ENCODE measurements at regions of chr13 and their contacts with region 1.

Region 1: GRCh38 chr13:51286135-51287002 is 53.1 kb upstream of the SERPINE3 start:
- DNase-seq: peak; percentile 83 to 91
- H3K4me3 ChIP-seq: no peak overlapping the region
- H3K27ac ChIP-seq: no peak overlapping the region
- H3K4me1 ChIP-seq: peaks cover 0 to 17% (median 10%) of the 10 kb centered on the region in 4 donors
- H3K27me3 ChIP-seq: no peaks in the 10 kb centered on the region
- CTCF ChIP-seq: peak in 6 of 7 experiments; percentile 4 to 87 (median 80)
- EP300 ChIP-seq: no peak
- POLR2A ChIP-seq: no peak

Region 2: DNA sequence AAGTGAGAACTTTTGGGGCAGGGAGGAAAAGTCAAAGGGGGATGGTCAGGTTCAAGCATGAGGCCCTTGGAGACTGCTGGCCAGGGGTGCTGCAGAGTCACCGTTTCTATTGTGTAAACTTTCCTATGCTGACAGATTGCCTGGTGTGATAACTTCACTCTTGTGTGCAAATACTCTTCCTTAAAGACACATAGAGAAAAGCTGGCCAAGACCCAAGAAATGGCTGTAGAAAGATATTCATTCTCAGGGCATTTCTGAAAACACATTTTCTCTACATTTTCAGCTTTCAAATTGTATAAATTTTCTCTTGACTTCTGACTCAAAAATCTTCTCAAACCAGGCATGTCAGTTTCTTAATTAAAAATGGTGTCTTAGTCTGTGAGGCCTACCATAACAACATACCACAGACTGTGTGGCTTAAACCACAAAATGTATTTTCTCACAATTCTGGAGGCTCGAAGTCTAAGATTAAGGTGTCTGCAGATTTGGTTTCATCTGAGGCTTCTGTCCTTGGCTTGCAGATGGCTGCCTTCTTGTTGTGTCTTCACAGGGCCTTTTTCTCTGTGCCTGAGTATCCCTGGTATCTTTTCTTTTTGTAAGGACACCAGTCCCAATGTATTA is 966.6 kb before region 1 on chr13:
- intact Hi-C with region 1: no loop called
- DNase-seq: peak in 1 of 2 donors; percentile 23
- H3K4me3 ChIP-seq: no peak overlapping the region
- H3K27ac ChIP-seq: no peak overlapping the region
- H3K4me1 ChIP-seq: peaks cover 0 to 17% (median 7%) of the 10 kb centered on the region in 4 donors
- H3K27me3 ChIP-seq: no peaks in the 10 kb centered on the region
- CTCF ChIP-seq: no peak
- EP300 ChIP-seq: no peak
- POLR2A ChIP-seq: no peak

Region 3: GRCh38 chr13:51154029-51154555 is 132.3 kb before region 1 on chr13:
- intact Hi-C with region 1: loop called (anchors 10 kb)
- DNase-seq: no peak
- H3K4me3 ChIP-seq: no peak overlapping the region
- H3K27ac ChIP-seq: no peak overlapping the region
- H3K4me1 ChIP-seq: no peaks in the 10 kb centered on the region
- H3K27me3 ChIP-seq: no peaks in the 10 kb centered on the region
- CTCF ChIP-seq: no peak
- EP300 ChIP-seq: no peak
- POLR2A ChIP-seq: no peak

Region 4: GRCh38 chr13:51181786-51182383 is 104.5 kb before region 1 on chr13:
- intact Hi-C with region 1: no loop called
- DNase-seq: no peak
- H3K4me3 ChIP-seq: no peak overlapping the region
- H3K27ac ChIP-seq: no peak overlapping the region
- H3K4me1 ChIP-seq: no peaks in the 10 kb centered on the region
- H3K27me3 ChIP-seq: peaks cover 0 to 10% (median 0%) of the 10 kb centered on the region in 3 donors
- CTCF ChIP-seq: no peak
- EP300 ChIP-seq: no peak
- POLR2A ChIP-seq: no peak

Region 5: DNA sequence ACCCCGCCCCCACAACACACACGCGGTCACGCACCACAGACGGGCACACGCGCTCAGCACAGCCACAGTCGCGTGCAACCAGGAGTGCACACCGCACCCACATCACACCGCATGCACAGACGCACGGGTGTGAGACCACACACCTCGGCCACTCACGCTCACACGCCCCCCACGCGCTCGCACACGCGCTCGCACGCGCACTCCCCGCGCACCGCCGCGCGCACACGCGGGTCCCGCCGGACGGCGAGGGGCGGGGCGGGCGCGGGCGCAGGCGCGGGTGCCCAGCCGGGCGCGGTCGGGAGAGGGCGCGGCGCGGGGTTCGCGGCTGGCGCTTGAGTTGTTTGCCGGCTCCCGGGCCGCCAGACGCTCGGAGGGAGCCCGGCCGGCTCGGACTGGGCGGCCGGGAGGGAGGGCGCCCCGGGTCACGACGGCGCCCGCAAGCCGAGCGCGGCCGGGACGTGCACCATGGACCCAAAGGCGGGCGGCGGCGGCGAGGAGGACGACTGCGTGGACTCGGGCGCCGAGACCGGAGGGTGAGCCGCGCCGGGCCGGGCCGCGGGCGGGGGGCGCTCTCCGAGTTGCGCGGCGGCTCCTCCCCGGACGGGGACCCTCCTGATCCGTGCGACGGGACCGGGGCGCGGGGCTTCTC is 64.2 kb before region 1 on chr13 and contains the start of gene FAM124A:
- intact Hi-C with region 1: loop called (anchors 5 kb)
- DNase-seq: peak; percentile 57 to 82
- H3K4me3 ChIP-seq: peak within 1 kb of the TSS; percentile 82 to 90 (median 85)
- H3K27ac ChIP-seq: peak within 1 kb of the TSS; percentile 19 to 85 (median 61)
- H3K4me1 ChIP-seq: peaks cover 0 to 33% (median 17%) of the 10 kb centered on the region in 4 donors
- H3K27me3 ChIP-seq: peaks cover 0 to 32% (median 5%) of the 10 kb centered on the region in 3 donors
- CTCF ChIP-seq: peak in 1 of 7 experiments; percentile 57
- EP300 ChIP-seq: no peak
- POLR2A ChIP-seq: no peak
- total RNA-seq, gene FAM124A: 2.4 to 21.0 (median 2.9) TPM

Region 6: DNA sequence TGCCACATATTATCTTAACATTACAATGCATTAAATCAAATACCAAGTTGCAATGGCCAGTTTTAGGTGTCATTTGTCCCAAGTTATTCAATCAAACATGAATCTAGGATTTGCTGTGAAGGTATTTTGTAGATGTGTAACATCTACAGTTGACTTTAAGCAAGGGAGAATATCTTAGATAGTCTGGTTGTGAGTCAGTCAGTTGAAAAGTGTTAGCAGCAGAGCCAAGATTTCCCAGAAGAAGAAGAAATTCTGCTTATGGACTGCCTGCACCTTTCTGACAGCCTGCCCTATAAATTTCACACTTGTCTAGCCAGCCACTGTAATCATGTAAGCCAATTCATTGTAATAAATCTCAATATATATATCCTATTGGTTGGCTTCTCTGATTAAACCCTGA is 207.8 kb after region 1 on chr13:
- intact Hi-C with region 1: no loop called
- DNase-seq: no peak
- H3K4me3 ChIP-seq: no peak overlapping the region
- H3K27ac ChIP-seq: no peak overlapping the region
- H3K4me1 ChIP-seq: no peaks in the 10 kb centered on the region
- H3K27me3 ChIP-seq: no peaks in the 10 kb centered on the region
- CTCF ChIP-seq: no peak
- EP300 ChIP-seq: no peak
- POLR2A ChIP-seq: no peak

Measured in stomach (tissue), 19 donors.